ENCODE measurements at regions of chr3 and their contacts with region 1.

Region 1: DNA sequence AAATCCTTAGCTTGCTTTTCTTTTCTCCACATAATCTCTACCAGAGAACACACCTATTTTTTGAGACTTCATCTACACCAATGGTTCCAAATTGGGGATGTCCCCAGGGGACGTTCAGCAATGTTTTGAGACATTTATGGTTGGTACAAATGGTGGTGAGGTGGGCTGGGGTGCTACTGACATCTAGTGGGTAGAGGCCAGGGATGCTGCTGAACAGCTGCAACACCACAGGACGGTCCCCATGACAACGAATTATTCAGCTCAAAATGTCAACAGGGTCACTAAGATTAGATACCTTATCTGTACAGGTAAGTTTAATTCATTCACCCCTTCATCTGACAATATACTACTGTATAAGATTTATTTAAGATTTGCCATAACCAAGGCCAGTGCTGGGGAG is 14.3 kb downstream of the GK5 start:
- DNase-seq: no peak
- H3K4me3 ChIP-seq: no peak overlapping the region
- H3K27ac ChIP-seq: no peak overlapping the region
- H3K4me1 ChIP-seq: no peaks in the 10 kb centered on the region
- H3K27me3 ChIP-seq: no peaks in the 10 kb centered on the region
- CTCF ChIP-seq: peak in 1 of 2 donors; percentile 24

Region 2: DNA sequence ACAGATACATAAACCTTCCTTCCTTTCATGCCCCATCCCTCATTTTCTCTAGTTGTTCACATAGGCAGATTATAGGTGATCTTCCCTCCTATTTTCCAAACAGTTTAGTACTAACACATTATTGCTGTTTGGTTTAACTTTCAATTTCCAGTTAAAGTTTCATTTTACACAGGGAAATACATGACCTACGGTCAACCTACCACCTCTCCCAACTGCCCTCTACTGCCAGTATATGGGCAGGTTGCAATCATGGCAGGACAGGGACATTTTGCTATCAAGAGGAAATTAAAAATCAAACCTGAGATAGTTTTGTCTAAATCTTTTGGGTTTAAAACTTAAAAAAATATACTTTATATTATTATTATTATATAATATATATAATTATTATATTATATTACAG is 35.6 kb before region 1 on chr3:
- CTCF ChIA-PET with region 1: no interaction called
- dilution Hi-C with region 1: no loop called
- in situ Hi-C with region 1: no loop called
- intact Hi-C with region 1: loop called (anchors 5 kb)
- DNase-seq: no peak
- H3K4me3 ChIP-seq: no peak overlapping the region
- H3K27ac ChIP-seq: no peak overlapping the region
- H3K4me1 ChIP-seq: no peaks in the 10 kb centered on the region
- H3K27me3 ChIP-seq: peaks cover 1% of the 10 kb centered on the region
- CTCF ChIP-seq: no peak